ENCODE measurements at regions of chr9 and their contacts with region 1.

Region 1: DNA sequence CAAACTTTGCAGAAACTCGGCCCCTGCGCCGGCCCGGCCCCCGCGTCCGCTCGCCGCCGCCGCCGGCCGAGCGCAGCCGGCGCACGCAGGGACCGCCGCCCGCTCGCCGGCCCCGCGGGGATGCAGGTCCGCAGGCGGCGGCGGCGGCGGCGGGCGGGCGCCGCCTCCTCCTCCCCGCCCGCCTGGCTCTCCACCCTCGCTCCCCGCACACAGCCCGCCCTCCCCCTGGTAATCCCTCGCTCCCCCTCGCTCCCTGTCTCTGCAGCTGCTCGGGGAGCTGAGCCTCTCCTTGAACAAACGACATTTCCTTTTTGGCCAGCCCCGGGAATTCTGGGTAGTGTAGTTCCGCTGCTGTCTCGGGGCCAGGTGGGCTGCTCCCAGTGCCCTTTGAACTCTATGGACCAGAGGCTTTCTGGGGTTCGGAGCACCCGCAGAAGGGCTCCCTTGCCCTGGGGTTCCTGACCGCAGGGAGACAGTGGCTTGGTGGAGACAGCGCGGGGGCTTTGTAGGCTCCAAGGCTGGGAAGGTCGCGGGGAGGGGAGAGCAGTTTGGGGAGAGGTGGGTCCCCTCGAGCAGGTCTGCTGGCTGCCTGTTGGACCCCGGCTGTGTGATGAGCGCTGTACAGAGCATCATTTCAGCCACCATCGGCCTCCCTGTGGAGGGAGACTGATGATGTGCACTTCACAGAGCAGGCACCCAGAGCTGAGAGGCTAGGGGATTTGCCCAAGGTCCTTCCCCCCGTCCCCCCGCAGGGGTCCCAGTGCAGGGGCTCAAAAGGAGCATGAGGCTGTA is 1.8 kb upstream of the FAM78A start:
- DNase-seq: peak; percentile 63
- H3K4me3 Mint-ChIP-seq: peak overlapping the region; percentile 86
- H3K27ac Mint-ChIP-seq: peak overlapping the region; percentile 93
- H3K4me1 Mint-ChIP-seq: peaks cover 30% of the 10 kb centered on the region
- H3K27me3 Mint-ChIP-seq: peaks cover 16% of the 10 kb centered on the region

Region 2: GRCh38 chr9:131178382-131178781 is 99.7 kb before region 1 on chr9:
- intact Hi-C with region 1: loop called (anchors 1 kb)
- DNase-seq: peak; percentile 72
- H3K4me3 Mint-ChIP-seq: no peak overlapping the region
- H3K27ac Mint-ChIP-seq: no peak overlapping the region
- H3K4me1 Mint-ChIP-seq: peaks cover 16% of the 10 kb centered on the region
- H3K27me3 Mint-ChIP-seq: no peaks in the 10 kb centered on the region

Region 3: DNA sequence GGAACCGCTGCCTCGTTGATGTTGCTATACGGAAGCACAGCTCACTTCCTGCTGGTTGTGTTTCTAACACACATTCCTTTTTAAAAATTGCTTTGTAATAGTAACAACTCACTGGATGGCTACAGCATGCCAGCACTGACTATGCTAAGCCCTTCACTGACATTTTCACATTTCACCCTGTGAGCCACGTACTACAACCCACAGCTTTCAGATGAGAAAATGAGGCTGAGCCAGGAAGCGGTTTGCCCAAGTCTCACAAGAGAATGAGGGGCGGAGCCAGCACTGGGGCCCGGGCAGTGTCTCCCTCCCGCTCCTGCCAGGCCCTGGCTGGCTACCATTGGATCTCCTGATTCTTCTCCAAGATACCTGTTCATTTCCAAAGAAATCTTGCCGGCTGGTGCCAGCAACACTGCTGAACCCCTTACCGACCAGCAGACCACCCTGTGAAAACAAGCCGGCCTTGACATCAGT is 40.1 kb before region 1 on chr9:
- intact Hi-C with region 1: loop called (anchors 1 kb)
- DNase-seq: peak; percentile 82
- H3K4me3 Mint-ChIP-seq: peak overlapping the region; percentile 58
- H3K27ac Mint-ChIP-seq: peak overlapping the region; percentile 90
- H3K4me1 Mint-ChIP-seq: peaks cover 35% of the 10 kb centered on the region
- H3K27me3 Mint-ChIP-seq: no peaks in the 10 kb centered on the region

Region 4: DNA sequence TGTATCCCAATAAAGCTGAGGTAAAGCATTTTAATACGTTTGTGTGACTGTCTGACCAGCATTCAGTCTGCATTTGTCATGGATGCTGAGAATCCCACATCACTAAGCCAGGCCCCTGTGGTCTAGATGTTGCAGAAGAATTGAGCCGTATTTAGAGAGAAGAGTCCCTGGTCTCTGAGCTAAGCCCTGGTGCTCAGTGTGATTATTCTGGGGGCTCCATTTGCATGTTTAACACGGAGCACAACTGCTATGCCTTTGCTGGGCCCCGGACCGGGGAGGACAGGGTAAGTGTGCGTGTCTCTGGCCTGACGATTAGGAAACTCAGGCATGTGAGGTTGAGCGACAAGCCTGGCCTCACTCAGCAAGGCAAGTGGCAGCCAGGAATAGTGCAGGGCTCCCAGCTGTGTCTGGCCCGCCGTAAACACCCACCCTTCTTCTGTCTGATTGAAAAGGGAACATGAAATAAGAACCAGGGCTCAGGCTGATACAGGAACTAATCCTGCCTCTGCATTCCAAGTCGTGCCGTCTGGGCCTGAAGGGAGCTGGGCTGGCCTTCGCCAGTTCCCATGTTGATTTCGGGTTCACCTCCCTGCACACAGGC is 24.1 kb before region 1 on chr9:
- intact Hi-C with region 1: loop called (anchors 1 kb)
- DNase-seq: no peak
- H3K4me3 Mint-ChIP-seq: no peak overlapping the region
- H3K27ac Mint-ChIP-seq: peak overlapping the region; percentile 29
- H3K4me1 Mint-ChIP-seq: peaks cover 46% of the 10 kb centered on the region
- H3K27me3 Mint-ChIP-seq: no peaks in the 10 kb centered on the region

Region 5: DNA sequence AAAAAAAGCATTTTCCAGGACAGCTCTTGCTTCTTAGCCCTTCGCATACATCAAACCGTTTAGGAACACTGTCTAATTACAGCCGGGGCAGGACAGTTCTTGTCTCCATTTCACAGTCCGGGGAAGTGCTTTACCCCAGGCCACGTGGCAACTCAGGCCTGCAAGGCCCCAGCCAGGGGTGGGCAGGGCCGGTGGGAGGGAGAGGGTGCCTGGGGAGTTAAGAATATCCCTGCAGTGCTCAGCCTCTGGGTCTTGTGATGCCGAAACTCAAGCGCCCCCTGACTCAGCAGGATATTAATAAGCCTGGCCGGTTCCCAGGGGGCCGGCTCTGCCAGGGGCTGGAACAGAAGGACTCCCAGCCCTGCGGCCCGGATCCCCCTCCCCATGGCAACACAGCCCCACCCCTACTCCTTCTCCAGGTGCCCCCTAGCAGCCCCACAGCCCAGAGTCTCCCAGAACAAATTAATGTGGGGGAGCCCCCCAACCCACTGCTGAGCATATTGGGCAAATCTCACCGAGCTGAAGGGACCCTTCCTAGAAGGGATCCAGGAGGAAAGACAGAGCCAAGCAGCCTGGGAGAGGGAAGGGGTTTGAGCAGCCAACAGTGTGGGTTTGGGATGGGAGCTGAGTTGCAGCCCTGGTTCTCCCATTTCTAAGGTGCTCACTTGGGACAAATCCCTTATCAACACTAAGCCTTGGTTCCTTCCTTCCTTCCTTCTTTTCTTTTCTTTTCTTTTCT is 56.7 kb after region 1 on chr9:
- intact Hi-C with region 1: loop called (anchors 2 kb)
- DNase-seq: no peak
- H3K4me3 Mint-ChIP-seq: no peak overlapping the region
- H3K27ac Mint-ChIP-seq: no peak overlapping the region
- H3K4me1 Mint-ChIP-seq: peaks cover 4% of the 10 kb centered on the region
- H3K27me3 Mint-ChIP-seq: peaks cover 2% of the 10 kb centered on the region

Measured in activated T-helper 1 cell treated with anti-CD3 and anti-CD28 coated beads, Interleukin-12 subunit alpha, Interleukin-12 subunit beta, Interleukin-2, Interleukin-4 antibody, amounts not matched to agents 30 ng/mL and 10 ng/mL and 1 ng/mL, durations not matched to agents 14 hours and 24 hours and 36 hours (primary cell).